Posterior vena cava (tissue), 2 donors: ENCODE measurements at regions of chr18 and their contacts with region 1.

Region 1: GRCh38 chr18:6389005-6389404 is 25.7 kb downstream of the L3MBTL4 start:
- DNase-seq: no peak

Region 2: DNA sequence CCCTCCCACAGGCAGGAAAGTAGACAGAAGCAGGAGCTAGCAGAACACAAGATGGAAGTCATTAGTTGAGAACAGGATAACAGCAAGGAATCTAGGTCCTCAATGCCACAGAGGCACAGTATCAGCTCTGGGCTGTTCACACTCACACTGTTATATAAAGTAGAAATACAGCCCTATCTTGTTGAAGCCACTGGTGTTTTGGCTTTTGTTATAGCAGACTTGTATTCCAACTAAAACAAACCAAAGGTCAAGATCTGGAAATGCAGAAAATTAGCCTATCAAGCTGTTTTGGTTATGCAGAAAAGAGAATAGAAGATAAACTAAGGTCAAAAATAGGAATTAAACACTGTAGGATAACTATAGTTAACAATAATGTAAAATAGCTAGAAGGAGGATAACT is 63.2 kb after region 1 on chr18:
- intact Hi-C with region 1: loop called in 1 of 2 experiments (anchors 5 kb)
- DNase-seq: no peak